ENCODE measurements at regions of chr17 and their contacts with region 1.

Region 1: DNA sequence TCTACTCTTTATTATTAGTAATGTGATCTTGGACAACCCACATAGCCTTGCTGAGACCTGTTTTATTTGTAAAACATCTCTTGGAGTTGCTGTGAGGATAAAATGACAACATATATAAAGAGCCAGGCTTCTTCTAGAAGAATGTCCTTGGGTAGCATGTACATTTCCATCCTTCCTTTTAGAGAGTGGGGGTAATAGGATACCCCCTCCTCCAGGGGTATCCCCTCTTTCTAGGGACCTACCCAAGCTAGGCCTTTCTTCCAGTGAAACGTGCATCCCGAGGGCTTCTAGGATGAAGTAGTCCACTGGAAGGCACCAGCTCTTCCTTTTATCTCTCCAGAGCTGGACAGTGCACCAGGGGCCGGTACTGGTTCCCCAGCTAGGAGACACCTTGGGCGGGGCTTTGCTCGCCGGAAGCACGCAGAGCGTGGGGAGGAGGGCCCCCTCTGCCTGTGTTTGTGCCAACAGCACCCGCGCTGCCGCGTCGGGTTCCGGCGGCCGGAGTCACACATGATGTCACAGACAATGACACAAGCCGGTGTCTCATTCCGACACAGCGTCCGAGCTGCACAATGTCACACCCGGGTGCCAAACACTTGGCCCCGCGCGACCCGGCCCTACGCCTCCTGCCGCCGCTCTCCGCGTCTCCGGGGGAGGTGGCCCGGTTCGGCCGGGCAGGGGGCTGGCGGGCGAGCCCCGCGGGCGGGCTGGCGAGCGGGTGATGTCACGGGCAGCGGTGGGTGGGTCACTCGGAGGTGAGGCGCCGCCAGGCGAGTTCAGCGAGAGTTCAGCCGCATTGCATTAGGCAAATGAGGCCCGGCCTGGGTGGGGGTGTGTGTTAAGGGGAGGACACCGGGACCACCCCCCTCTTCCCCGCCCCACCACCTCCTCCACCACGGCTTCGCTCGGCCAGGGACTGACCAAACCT is 23.4 kb downstream of the GJD3 start:
- DNase-seq: peak; percentile 97
- H3K4me3 ChIP-seq: peak overlapping the region; percentile 61 to 83 (median 82)
- H3K27ac ChIP-seq: peak overlapping the region; percentile 94 to 99 (median 96)
- H3K4me1 ChIP-seq: peaks cover 0 to 79% (median 61%) of the 10 kb centered on the region in 4 donors
- H3K27me3 ChIP-seq: no peaks in the 10 kb centered on the region
- CTCF ChIP-seq: no peak
- EP300 ChIP-seq: peak in 2 of 4 donors; percentile 53 to 94
- POLR2A ChIP-seq: peak; percentile 49 to 55

Region 2: GRCh38 chr17:40098846-40099618 is 242.1 kb before region 1 on chr17:
- intact Hi-C with region 1: loop called (anchors 5 kb)
- DNase-seq: peak; percentile 100
- H3K4me3 ChIP-seq: peak overlapping the region; percentile 69 to 97 (median 90)
- H3K27ac ChIP-seq: peak overlapping the region; percentile 97 to 100 (median 98)
- H3K4me1 ChIP-seq: peaks cover 0 to 81% (median 79%) of the 10 kb centered on the region in 4 donors
- H3K27me3 ChIP-seq: no peaks in the 10 kb centered on the region
- CTCF ChIP-seq: no peak
- EP300 ChIP-seq: peak in 2 of 4 donors; percentile 75 to 94
- POLR2A ChIP-seq: peak; percentile 92 to 97

Region 3: DNA sequence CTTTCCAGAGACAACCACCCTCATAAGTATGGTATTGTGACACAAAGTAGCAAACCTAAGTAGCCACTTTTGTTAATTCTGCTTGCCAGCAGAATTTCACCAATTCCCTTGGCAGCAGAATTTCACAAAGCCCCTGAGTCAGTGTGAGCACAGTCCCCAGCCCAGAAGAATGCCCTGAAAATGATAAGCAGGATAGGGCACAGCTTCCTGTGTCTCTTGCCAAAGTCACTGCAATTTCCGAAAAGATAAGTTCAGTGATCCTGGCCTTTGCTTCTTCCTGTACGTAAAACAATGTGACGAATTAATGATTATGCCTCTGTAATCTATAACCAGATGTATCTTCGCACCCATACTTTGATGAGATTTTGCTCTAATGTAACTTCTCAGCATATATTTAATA is 138.0 kb before region 1 on chr17:
- intact Hi-C with region 1: loop called (anchors 2 kb)
- DNase-seq: no peak
- H3K4me3 ChIP-seq: no peak overlapping the region
- H3K27ac ChIP-seq: no peak overlapping the region
- H3K4me1 ChIP-seq: peaks cover 0 to 8% (median 4%) of the 10 kb centered on the region in 4 donors
- H3K27me3 ChIP-seq: no peaks in the 10 kb centered on the region
- CTCF ChIP-seq: no peak
- EP300 ChIP-seq: no peak
- POLR2A ChIP-seq: no peak

Region 4: DNA sequence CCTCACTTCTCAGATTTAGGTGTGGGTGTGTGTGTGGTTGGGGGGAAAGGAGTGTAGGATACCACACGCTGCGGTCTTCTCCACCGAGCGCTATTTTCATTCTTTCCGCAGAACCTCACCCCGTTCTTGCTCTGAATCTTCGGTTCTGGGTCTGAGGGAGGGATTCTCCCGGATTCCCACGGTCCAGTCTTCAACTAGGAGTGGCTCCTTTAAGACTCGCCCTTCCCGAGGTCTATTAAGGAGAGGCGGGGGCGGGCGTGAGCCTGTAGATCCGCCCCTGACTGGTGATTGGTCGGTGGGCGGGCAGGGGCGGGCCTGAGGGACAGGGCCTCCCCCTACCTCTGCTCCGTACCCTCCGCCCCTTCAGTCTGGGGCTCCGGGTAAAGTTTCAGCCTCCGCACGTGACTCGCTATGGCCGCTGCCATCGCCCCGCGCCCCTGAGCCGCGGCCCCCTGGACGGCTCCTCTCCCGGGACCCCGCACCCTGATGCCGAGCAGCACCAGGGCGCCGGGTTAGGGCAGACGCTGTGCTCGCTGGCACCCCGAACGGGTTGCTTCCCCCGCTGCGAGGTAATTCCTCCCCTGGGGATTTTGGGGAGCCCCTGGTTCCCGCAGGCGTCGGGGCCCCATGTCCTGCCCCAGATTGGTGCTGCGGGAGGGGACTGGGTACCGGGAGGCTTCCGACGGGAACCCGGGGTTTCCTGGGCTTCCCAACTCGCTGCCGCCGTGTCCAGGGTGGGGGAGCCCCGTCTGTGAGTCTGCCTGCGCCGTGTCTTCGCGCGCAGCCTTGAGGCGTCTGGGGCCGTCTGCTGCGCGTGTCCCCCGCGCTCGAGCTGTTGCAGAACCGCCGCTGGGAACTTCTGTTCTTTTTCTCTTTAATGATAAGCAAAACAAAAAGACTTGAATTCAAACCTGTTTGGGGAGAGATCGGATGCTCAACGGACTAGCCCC is 23.0 kb before region 1 on chr17:
- intact Hi-C with region 1: loop called (anchors 2 kb)
- DNase-seq: peak; percentile 99
- H3K4me3 ChIP-seq: peak overlapping the region; percentile 78 to 98 (median 85)
- H3K27ac ChIP-seq: peak overlapping the region; percentile 93 to 98 (median 96)
- H3K4me1 ChIP-seq: peaks cover 0 to 96% (median 92%) of the 10 kb centered on the region in 4 donors
- H3K27me3 ChIP-seq: no peaks in the 10 kb centered on the region
- CTCF ChIP-seq: no peak
- EP300 ChIP-seq: no peak
- POLR2A ChIP-seq: peak; percentile 60 to 72

Measured in sigmoid colon (tissue), 7 donors.